Activated CD4-positive, alpha-beta T cell treated with anti-CD3 and anti-CD28 coated beads for 36 hours (primary cell): ENCODE measurements at regions of chrX and their contacts with region 1.

Region 1: DNA sequence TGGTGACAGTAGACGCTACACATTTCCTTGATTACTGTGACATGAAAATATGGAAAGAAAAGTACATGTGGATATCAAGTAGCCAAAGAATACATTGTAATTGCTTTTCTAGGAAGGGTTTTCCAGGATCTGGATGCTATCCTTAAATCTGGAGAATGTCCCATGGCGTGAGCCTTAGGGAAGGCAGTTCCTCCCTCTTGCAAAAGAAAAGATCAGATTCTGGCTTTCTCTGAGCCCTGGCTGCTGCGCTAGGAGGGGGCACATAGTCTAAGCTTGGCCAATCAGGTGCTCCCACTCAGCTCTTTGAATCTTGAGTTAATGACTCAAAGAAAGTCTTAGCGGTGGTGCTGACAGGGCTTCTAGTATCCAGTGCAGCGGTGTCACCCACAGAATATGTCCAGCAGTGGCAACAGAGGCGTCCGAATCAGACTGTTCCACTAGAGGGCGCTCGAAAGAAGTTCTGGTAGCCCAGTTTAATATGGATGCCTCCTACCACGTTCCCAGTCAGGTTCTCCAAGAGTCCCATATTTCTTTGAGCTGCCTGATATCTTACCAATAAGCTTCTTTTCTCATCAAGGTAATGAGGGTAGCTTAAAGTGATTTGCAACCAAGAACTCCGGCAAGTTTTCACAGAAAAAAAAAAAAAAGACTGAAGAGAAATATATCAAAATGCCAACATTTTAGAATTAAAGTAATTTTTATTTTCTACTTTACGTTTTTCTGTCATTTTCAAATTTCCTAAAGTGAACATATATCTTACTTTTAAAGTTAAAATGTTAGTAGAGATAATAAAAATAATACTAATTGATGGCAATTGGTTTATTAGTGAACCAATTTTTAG is 213.4 kb upstream of the S100G start:
- DNase-seq: peak; percentile 77
- ATAC-seq: peak; percentile 86
- H3K4me3 Mint-ChIP-seq: no peak overlapping the region
- H3K27ac Mint-ChIP-seq: no peak overlapping the region
- H3K4me1 Mint-ChIP-seq: peaks cover 12% of the 10 kb centered on the region
- H3K27me3 Mint-ChIP-seq: no peaks in the 10 kb centered on the region

Region 2: DNA sequence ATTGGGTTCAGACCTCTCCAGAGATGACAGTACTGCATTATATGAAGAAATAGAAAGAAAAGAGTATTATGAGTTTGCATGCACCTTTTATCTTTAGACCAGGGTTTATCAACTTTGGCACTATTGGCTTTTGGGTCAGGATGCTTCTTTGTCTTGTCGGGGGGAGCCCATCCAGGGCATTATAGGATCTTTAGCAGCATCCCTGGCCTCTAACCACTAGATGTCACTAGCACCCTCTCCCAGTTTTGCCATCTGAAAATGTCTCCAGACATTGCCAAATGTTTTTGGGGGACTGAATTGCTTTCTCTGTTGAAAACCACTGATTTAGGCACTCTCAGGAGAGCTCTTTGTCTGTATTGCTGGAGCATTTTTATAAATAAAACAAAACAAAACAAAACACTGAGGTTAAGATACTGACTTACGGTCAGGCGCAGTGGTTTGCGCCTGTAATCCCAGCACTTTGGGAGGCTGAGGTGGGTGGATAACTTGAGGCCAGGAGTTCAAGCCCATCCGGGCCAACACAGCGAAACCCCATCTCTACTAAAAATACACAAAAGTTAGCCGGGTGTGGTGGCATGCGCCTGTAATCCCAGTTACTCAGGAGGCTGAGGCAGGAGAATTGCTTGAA is 674.9 kb before region 1 on chrX:
- CTCF ChIA-PET with region 1: no interaction called
- POLR2A ChIA-PET with region 1: no interaction called
- intact Hi-C with region 1: loop called in 1 of 2 experiments (anchors 10 kb)
- DNase-seq: peak; percentile 49
- ATAC-seq: peak; percentile 80
- H3K4me3 Mint-ChIP-seq: no peak overlapping the region
- H3K27ac Mint-ChIP-seq: peak overlapping the region; percentile 70
- H3K4me1 Mint-ChIP-seq: peaks cover 38% of the 10 kb centered on the region
- H3K27me3 Mint-ChIP-seq: no peaks in the 10 kb centered on the region

Region 3: GRCh38 chrX:16267431-16267830 is 169.1 kb before region 1 on chrX:
- CTCF ChIA-PET with region 1: no interaction called
- POLR2A ChIA-PET with region 1: no interaction called
- intact Hi-C with region 1: no loop called
- DNase-seq: no peak
- ATAC-seq: no peak
- H3K4me3 Mint-ChIP-seq: no peak overlapping the region
- H3K27ac Mint-ChIP-seq: no peak overlapping the region
- H3K4me1 Mint-ChIP-seq: no peaks in the 10 kb centered on the region
- H3K27me3 Mint-ChIP-seq: no peaks in the 10 kb centered on the region

Region 4: GRCh38 chrX:16670998-16671397 is 234.4 kb after region 1 on chrX:
- CTCF ChIA-PET with region 1: interaction called, 4 read pairs
- POLR2A ChIA-PET with region 1: no interaction called
- intact Hi-C with region 1: loop called (anchors 2 kb)
- DNase-seq: peak; percentile 27
- ATAC-seq: no peak
- H3K4me3 Mint-ChIP-seq: no peak overlapping the region
- H3K27ac Mint-ChIP-seq: no peak overlapping the region
- H3K4me1 Mint-ChIP-seq: no peaks in the 10 kb centered on the region
- H3K27me3 Mint-ChIP-seq: no peaks in the 10 kb centered on the region

Region 5: GRCh38 chrX:16695079-16695676 is 258.6 kb after region 1 on chrX:
- CTCF ChIA-PET with region 1: interaction called, 7 read pairs
- POLR2A ChIA-PET with region 1: no interaction called
- intact Hi-C with region 1: loop called in 1 of 2 experiments (anchors 2 kb)
- DNase-seq: peak; percentile 72
- ATAC-seq: peak; percentile 39
- H3K4me3 Mint-ChIP-seq: no peak overlapping the region
- H3K27ac Mint-ChIP-seq: no peak overlapping the region
- H3K4me1 Mint-ChIP-seq: no peaks in the 10 kb centered on the region
- H3K27me3 Mint-ChIP-seq: no peaks in the 10 kb centered on the region